Transverse colon (tissue), 4 donors: ENCODE measurements at regions of chr18 and their contacts with region 1.

Region 1: GRCh38 chr18:31274915-31275314 is 43.0 kb upstream of the DSG1 start:
- DNase-seq: peak; percentile 77
- H3K4me3 ChIP-seq: no peak overlapping the region
- H3K27ac ChIP-seq: peak overlapping the region; percentile 66 to 78 (median 72)
- H3K4me1 ChIP-seq: peaks cover 4 to 43% (median 22%) of the 10 kb centered on the region in 4 donors
- H3K27me3 ChIP-seq: no peaks in the 10 kb centered on the region
- CTCF ChIP-seq: no peak
- EP300 ChIP-seq: no peak
- POLR2A ChIP-seq: no peak

Region 2: GRCh38 chr18:30465096-30465495 is 809.8 kb before region 1 on chr18:
- in situ Hi-C with region 1: no loop called
- intact Hi-C with region 1: loop called (anchors 5 kb)
- DNase-seq: no peak
- H3K4me3 ChIP-seq: no peak overlapping the region
- H3K27ac ChIP-seq: no peak overlapping the region
- H3K4me1 ChIP-seq: no peaks in the 10 kb centered on the region
- H3K27me3 ChIP-seq: no peaks in the 10 kb centered on the region
- CTCF ChIP-seq: no peak
- EP300 ChIP-seq: no peak
- POLR2A ChIP-seq: no peak

Region 3: GRCh38 chr18:31399306-31400032 is 124.6 kb after region 1 on chr18:
- in situ Hi-C with region 1: loop called in 2 of 4 experiments (anchors 25 kb)
- intact Hi-C with region 1: no loop called
- DNase-seq: peak; percentile 30
- H3K4me3 ChIP-seq: no peak overlapping the region
- H3K27ac ChIP-seq: peak overlapping the region; percentile 63 to 87 (median 74)
- H3K4me1 ChIP-seq: peaks cover 0 to 67% (median 35%) of the 10 kb centered on the region in 4 donors
- H3K27me3 ChIP-seq: no peaks in the 10 kb centered on the region
- CTCF ChIP-seq: no peak
- EP300 ChIP-seq: no peak
- POLR2A ChIP-seq: no peak

Region 4: DNA sequence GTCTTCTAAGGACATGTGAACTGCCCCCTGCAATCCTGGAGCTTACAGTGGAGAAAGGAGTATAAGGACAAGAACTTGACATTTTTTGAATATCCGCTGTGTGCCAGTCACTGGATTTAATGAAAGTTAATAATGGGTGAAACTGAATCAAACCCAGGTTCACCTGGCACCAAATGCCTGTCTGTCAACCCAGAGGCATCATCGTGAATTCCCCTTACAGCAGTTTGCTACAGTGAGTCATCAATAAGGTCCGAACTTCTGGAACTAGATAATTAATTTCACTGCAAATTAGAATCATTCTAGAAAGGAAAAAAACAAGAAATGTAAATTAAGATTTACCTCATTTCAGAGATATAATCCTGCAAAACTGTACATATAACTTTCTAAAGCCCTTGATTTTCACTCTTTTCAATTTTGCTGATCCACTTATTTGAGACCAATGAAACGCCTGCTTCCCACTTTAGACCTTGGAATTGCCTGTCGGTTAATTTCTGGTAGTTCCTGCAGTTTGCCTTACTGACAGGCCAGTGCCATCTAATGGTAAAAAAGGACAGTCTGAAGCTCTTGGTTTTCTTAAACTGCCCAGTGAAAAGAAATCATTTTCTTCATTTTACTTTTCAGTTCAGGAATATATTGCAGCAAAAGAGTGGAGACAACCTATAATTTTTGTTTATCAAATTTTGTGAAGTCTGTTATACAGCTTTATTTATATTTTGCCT is 231.3 kb after region 1 on chr18:
- in situ Hi-C with region 1: loop called in 1 of 4 experiments (anchors 25 kb)
- intact Hi-C with region 1: no loop called
- DNase-seq: no peak
- H3K4me3 ChIP-seq: no peak overlapping the region
- H3K27ac ChIP-seq: peak overlapping the region in 2 of 4 donors; percentile 11 to 77
- H3K4me1 ChIP-seq: peaks cover 0 to 40% (median 9%) of the 10 kb centered on the region in 4 donors
- H3K27me3 ChIP-seq: no peaks in the 10 kb centered on the region
- CTCF ChIP-seq: peak in 2 of 5 experiments; percentile 21
- EP300 ChIP-seq: no peak
- POLR2A ChIP-seq: no peak